ENCODE measurements at regions of chr2 and their contacts with region 1.

Region 1: DNA sequence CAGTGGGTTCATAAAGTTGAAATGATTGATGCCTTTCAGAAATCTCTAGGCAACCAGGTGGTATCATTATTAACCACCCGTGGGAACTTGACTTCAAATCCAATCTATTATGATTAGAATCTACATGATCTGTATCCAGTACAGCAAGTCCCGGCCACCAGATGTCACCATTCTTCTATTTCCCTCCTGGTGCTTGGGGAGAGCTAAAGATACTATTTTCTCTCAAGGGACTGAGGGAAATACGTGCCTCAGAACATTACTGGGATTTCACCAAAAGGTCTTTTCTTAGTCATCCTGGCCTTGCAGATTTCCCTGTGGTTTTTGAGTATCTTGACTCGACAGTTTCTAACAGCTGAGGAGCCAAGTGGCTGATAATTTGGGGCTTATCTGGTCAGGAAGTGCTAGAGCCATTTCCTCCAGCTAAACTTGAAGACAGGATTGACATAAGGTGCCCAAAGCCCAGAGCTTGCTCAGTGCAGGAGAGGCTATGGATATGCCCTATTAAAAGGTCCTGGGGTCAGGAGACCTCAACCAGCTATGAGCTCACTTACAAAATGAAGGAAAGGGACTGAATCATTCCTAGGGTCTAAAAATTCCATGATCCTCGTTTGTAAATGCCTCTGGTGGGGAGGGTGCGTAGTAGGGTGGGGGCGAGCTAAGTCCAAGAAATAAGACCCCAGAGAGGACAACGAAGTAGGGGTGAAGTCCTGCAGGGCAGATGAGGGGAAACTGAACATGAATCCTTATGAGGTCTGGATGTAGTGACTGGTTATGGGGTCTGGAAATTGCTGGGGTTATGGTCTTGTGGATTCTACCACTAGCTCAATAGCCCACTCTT is 135.4 kb upstream of the MGAT5 start:
- DNase-seq: peak; percentile 50
- ATAC-seq: peak; percentile 49
- H3K4me3 Mint-ChIP-seq: peak overlapping the region; percentile 99
- H3K27ac Mint-ChIP-seq: peak overlapping the region; percentile 46
- H3K4me1 Mint-ChIP-seq: peaks cover 38% of the 10 kb centered on the region
- H3K27me3 Mint-ChIP-seq: no peaks in the 10 kb centered on the region
- CTCF ChIP-seq: no peak

Region 2: GRCh38 chr2:134039912-134040581 is 78.5 kb before region 1 on chr2:
- CTCF ChIA-PET with region 1: interaction called, 3 read pairs
- POLR2A ChIA-PET with region 1: no interaction called
- intact Hi-C with region 1: loop called (anchors 2 kb)
- DNase-seq: no peak
- ATAC-seq: peak; percentile 57
- H3K4me3 Mint-ChIP-seq: peak overlapping the region; percentile 65
- H3K27ac Mint-ChIP-seq: peak overlapping the region; percentile 90
- H3K4me1 Mint-ChIP-seq: peaks cover 66% of the 10 kb centered on the region
- H3K27me3 Mint-ChIP-seq: no peaks in the 10 kb centered on the region
- CTCF ChIP-seq: no peak

Region 3: GRCh38 chr2:134181210-134181609 is 62.7 kb after region 1 on chr2:
- CTCF ChIA-PET with region 1: interaction called, 5 read pairs
- POLR2A ChIA-PET with region 1: interaction called, 4 read pairs
- intact Hi-C with region 1: loop called (anchors 2 kb)
- DNase-seq: no peak
- ATAC-seq: peak; percentile 43
- H3K4me3 Mint-ChIP-seq: peak overlapping the region; percentile 35
- H3K27ac Mint-ChIP-seq: peak overlapping the region; percentile 84
- H3K4me1 Mint-ChIP-seq: peaks cover 93% of the 10 kb centered on the region
- H3K27me3 Mint-ChIP-seq: no peaks in the 10 kb centered on the region
- CTCF ChIP-seq: no peak

Region 4: DNA sequence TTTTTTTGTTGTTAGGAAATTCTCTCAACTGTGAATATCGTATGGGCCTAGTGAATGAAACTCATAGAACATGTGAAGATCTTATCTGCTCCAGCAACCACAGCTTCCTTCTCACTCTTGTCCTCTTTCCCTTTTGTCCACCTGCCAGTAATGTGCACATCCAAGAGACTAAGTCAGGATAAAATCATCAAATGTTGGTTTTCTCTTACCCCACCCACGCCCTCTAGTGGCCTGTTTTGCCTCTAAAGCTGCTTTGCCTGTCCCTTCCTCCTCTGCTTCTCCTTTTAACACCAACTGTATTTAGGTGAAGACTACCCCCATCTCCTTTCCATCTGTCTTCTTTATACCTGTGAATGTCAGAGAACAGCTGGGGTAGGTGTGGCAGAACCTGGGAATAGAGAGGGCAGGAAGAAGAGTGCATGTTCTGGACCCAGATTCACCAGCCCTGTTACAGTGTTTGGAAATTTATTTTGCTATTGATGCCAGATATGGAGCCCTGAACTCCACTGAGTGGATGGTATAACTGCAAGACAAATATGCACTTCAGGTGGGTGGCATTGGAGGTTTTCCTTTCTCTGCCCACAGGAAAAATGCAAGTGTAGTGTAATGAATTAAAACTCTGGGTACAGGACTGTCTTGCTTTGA is 127.0 kb after region 1 on chr2:
- CTCF ChIA-PET with region 1: interaction called, 121 read pairs
- POLR2A ChIA-PET with region 1: interaction called, 63 read pairs
- intact Hi-C with region 1: loop called (anchors 1 kb)
- DNase-seq: peak; percentile 43
- ATAC-seq: peak; percentile 35
- H3K4me3 Mint-ChIP-seq: peak overlapping the region; percentile 58
- H3K27ac Mint-ChIP-seq: peak overlapping the region; percentile 75
- H3K4me1 Mint-ChIP-seq: peaks cover 95% of the 10 kb centered on the region
- H3K27me3 Mint-ChIP-seq: no peaks in the 10 kb centered on the region
- CTCF ChIP-seq: peak; percentile 19

Region 5: DNA sequence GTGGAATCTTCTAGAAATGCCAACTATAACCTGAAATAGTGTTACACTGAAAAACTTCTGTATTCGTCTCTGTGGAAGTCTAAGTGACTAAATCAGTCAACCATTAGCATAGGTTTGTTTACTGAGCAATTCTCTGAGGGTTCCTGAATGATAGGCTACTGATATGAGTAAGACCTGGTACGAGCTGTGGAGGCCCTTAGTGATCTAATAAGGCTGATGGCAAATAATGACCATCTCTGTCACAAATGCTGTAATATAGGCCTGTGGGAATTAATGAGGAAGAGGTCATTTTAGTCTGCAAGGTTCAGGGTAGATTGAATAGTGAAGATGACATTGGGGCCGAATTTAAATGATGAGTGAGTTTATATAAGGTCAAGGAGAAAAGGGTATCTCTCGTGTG is 217.9 kb after region 1 on chr2:
- CTCF ChIA-PET with region 1: interaction called, 4 read pairs
- POLR2A ChIA-PET with region 1: interaction called, 4 read pairs
- intact Hi-C with region 1: loop called (anchors 5 kb)
- DNase-seq: no peak
- ATAC-seq: peak; percentile 82
- H3K4me3 Mint-ChIP-seq: peak overlapping the region; percentile 12
- H3K27ac Mint-ChIP-seq: peak overlapping the region; percentile 57
- H3K4me1 Mint-ChIP-seq: peaks cover 64% of the 10 kb centered on the region
- H3K27me3 Mint-ChIP-seq: no peaks in the 10 kb centered on the region
- CTCF ChIP-seq: no peak

Region 6: GRCh38 chr2:134482131-134482723 is 363.7 kb after region 1 on chr2:
- CTCF ChIA-PET with region 1: no interaction called
- POLR2A ChIA-PET with region 1: no interaction called
- intact Hi-C with region 1: no loop called
- DNase-seq: no peak
- ATAC-seq: no peak
- H3K4me3 Mint-ChIP-seq: no peak overlapping the region
- H3K27ac Mint-ChIP-seq: no peak overlapping the region
- H3K4me1 Mint-ChIP-seq: no peaks in the 10 kb centered on the region
- H3K27me3 Mint-ChIP-seq: no peaks in the 10 kb centered on the region
- CTCF ChIP-seq: no peak

Region 7: GRCh38 chr2:134739879-134740301 is 621.4 kb after region 1 on chr2:
- CTCF ChIA-PET with region 1: no interaction called
- POLR2A ChIA-PET with region 1: no interaction called
- intact Hi-C with region 1: loop called (anchors 10 kb)
- DNase-seq: peak; percentile 62
- ATAC-seq: peak; percentile 88
- H3K4me3 Mint-ChIP-seq: peak overlapping the region; percentile 49
- H3K27ac Mint-ChIP-seq: peak overlapping the region; percentile 97
- H3K4me1 Mint-ChIP-seq: peaks cover 71% of the 10 kb centered on the region
- H3K27me3 Mint-ChIP-seq: no peaks in the 10 kb centered on the region
- CTCF ChIP-seq: no peak